ENCODE measurements at regions of chr3 and their contacts with region 1.

Region 1: DNA sequence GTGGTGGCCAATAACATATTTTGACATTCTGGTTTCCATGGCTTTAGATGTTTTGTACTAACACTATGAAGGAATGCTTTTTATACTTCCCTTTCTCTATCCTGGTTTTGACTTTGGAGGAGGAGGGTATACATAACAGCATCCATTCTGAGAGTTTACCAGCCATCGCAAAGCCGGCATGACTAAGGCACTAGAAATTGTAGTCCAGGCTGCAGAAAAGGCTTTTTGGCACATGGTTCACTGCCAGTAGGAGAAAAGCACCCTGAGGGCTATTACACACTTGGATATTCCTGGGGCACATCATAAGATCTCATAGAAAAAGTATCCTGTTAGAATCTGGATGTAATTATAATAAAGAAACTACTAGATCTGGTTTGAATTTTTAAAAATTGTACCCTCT is 101.8 kb downstream of the STT3B start:
- DNase-seq: no peak
- H3K4me3 Mint-ChIP-seq: no peak overlapping the region
- H3K27ac Mint-ChIP-seq: peak overlapping the region; percentile 9
- H3K4me1 Mint-ChIP-seq: peaks cover 26% of the 10 kb centered on the region
- H3K27me3 Mint-ChIP-seq: no peaks in the 10 kb centered on the region

Region 2: GRCh38 chr3:31592764-31593163 is 41.7 kb before region 1 on chr3:
- intact Hi-C with region 1: loop called (anchors 5 kb)
- DNase-seq: no peak
- H3K4me3 Mint-ChIP-seq: peak overlapping the region; percentile 0
- H3K27ac Mint-ChIP-seq: no peak overlapping the region
- H3K4me1 Mint-ChIP-seq: peaks cover 33% of the 10 kb centered on the region
- H3K27me3 Mint-ChIP-seq: no peaks in the 10 kb centered on the region

Region 3: GRCh38 chr3:31710123-31710803 is 75.8 kb after region 1 on chr3:
- intact Hi-C with region 1: no loop called
- DNase-seq: no peak
- H3K4me3 Mint-ChIP-seq: no peak overlapping the region
- H3K27ac Mint-ChIP-seq: no peak overlapping the region
- H3K4me1 Mint-ChIP-seq: peaks cover 7% of the 10 kb centered on the region
- H3K27me3 Mint-ChIP-seq: no peaks in the 10 kb centered on the region

Measured in activated CD4-positive, alpha-beta T cell treated with anti-CD3 and anti-CD28 coated beads, Interleukin-2, amount 10 ng/mL, durations not matched to agents 24 days and 14 days (primary cell).